CD8-positive, alpha-beta T cell (primary cell): ENCODE measurements at regions of chr10 and their contacts with region 1.

Region 1: GRCh38 chr10:93702211-93703001 is at the start of gene FRA10AC1:
- DNase-seq: peak; percentile 73 to 94 (median 89)
- ATAC-seq: peak; percentile 83
- H3K4me3 ChIP-seq: peak within 1 kb of the TSS; percentile 90 to 96
- H3K4me3 Mint-ChIP-seq: no peak within 1 kb of the TSS
- H3K27ac ChIP-seq: peak within 1 kb of the TSS; percentile 82 to 86
- H3K27ac Mint-ChIP-seq: no peak within 1 kb of the TSS
- H3K4me1 ChIP-seq: peaks cover 14% of the 10 kb centered on the region
- H3K4me1 Mint-ChIP-seq: peaks cover 15% of the 10 kb centered on the region
- H3K27me3 ChIP-seq: no peaks in the 10 kb centered on the region
- H3K27me3 Mint-ChIP-seq: no peaks in the 10 kb centered on the region
- CTCF ChIP-seq: no peak
- total RNA-seq, gene FRA10AC1: 6.2 to 7.0 TPM

Region 2: DNA sequence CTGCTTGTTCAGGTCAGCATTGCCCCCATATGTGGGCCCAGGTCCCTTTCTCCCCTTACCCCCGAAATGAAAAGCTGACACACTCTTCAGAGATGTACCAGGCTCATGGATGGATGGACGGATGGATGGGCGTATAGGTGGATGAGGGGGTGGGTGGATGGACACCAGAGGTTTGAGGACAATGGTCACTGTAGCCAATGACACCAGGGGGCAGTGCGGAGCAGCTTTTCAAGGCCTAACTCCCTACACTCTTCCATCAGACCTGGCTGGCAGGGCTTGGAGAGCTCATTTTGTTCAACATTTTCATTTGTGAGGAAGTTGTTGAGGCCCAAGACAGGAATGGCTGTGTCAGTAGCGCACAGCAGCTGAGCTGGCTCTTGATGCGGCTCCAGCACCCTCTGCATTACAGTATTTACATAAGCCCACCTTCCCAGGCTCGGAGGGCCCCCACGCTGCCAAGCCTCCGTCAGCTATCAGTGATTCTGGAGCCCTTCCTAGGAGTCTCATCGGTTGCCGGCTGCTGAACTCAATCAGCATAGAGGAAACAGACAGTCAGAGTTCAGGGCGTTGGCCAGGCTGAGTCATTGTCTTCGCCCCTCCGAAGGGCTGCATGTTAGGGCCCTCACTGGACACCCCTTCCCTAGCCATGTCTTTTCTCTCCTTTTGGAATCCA is 147.5 kb before region 1 on chr10:
- CTCF ChIA-PET with region 1: no interaction called
- POLR2A ChIA-PET with region 1: no interaction called
- intact Hi-C with region 1: no loop called
- DNase-seq: peak in 7 of 9 experiments; percentile 19 to 55 (median 31)
- ATAC-seq: no peak
- H3K4me3 ChIP-seq: no peak overlapping the region
- H3K4me3 Mint-ChIP-seq: no peak overlapping the region
- H3K27ac ChIP-seq: no peak overlapping the region
- H3K27ac Mint-ChIP-seq: no peak overlapping the region
- H3K4me1 ChIP-seq: no peaks in the 10 kb centered on the region
- H3K4me1 Mint-ChIP-seq: no peaks in the 10 kb centered on the region
- H3K27me3 ChIP-seq: no peaks in the 10 kb centered on the region
- H3K27me3 Mint-ChIP-seq: peaks cover 14% of the 10 kb centered on the region
- CTCF ChIP-seq: peak; percentile 42

Region 3: DNA sequence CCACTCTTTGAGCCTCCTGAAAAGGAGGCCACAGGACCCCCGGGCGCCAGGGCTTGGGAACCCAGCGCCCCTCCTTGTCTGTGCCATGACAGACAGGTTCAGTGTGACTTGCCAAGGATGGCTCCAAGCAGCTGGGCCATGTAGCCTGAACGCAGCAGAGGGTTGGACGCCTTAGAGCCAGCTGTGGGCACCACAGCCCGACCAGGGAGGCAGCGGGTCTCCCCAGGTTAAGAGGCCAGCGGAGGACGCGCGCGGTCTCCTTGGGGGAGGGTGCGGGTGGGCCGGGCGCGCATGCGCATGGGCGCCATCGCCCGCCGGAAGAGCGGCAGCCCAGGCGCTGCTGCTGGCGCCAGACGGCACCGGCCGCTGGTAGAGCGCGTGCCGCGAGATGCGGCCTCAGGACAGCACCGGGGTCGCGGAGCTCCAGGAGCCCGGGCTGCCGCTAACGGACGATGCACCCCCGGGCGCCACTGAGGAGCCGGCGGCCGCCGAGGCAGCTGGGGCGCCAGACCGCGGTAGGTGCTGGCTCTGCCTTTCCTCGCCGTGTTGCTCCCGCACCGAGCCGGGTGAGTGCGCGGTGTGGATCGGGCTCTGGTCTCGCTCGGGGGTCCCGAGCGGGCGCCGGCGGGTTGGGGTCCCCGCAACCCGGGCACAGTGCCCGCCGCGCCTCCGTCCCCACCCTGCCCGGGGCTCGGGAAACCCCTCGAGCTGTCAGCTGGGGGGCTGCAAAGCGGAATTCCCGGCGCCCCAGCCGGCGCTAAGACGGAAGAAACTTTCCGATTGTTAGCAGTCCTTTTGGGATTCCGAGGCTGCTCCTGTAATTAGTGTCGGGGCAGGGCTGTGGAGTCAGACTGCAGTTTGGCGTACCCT is 191.5 kb after region 1 on chr10 and contains the start of gene SLC35G1:
- CTCF ChIA-PET with region 1: no interaction called
- POLR2A ChIA-PET with region 1: no interaction called
- intact Hi-C with region 1: loop called (anchors 5 to 10 kb)
- DNase-seq: peak; percentile 40 to 86 (median 67)
- ATAC-seq: peak; percentile 85
- H3K4me3 ChIP-seq: peak within 1 kb of the TSS; percentile 56 to 60
- H3K4me3 Mint-ChIP-seq: peak within 1 kb of the TSS; percentile 83
- H3K27ac ChIP-seq: peak within 1 kb of the TSS in 1 of 2 experiments; percentile 17
- H3K27ac Mint-ChIP-seq: peak within 1 kb of the TSS; percentile 45
- H3K4me1 ChIP-seq: peaks cover 11% of the 10 kb centered on the region
- H3K4me1 Mint-ChIP-seq: peaks cover 37% of the 10 kb centered on the region
- H3K27me3 ChIP-seq: no peaks in the 10 kb centered on the region
- H3K27me3 Mint-ChIP-seq: peaks cover 14% of the 10 kb centered on the region
- CTCF ChIP-seq: no peak
- total RNA-seq, gene SLC35G1: 0.94 to 1.9 TPM

Region 4: GRCh38 chr10:94443047-94443446 is 740.6 kb after region 1 on chr10:
- CTCF ChIA-PET with region 1: no interaction called
- POLR2A ChIA-PET with region 1: no interaction called
- intact Hi-C with region 1: no loop called
- DNase-seq: no peak
- ATAC-seq: no peak
- H3K4me3 ChIP-seq: no peak overlapping the region
- H3K4me3 Mint-ChIP-seq: no peak overlapping the region
- H3K27ac ChIP-seq: no peak overlapping the region
- H3K27ac Mint-ChIP-seq: no peak overlapping the region
- H3K4me1 ChIP-seq: no peaks in the 10 kb centered on the region
- H3K4me1 Mint-ChIP-seq: no peaks in the 10 kb centered on the region
- H3K27me3 ChIP-seq: peaks cover 0 to 6% of the 10 kb centered on the region in 2 experiments
- H3K27me3 Mint-ChIP-seq: peaks cover 29% of the 10 kb centered on the region
- CTCF ChIP-seq: no peak